Ovary (tissue), 10 donors: ENCODE measurements at regions of chr7 and their contacts with region 1.

Region 1: DNA sequence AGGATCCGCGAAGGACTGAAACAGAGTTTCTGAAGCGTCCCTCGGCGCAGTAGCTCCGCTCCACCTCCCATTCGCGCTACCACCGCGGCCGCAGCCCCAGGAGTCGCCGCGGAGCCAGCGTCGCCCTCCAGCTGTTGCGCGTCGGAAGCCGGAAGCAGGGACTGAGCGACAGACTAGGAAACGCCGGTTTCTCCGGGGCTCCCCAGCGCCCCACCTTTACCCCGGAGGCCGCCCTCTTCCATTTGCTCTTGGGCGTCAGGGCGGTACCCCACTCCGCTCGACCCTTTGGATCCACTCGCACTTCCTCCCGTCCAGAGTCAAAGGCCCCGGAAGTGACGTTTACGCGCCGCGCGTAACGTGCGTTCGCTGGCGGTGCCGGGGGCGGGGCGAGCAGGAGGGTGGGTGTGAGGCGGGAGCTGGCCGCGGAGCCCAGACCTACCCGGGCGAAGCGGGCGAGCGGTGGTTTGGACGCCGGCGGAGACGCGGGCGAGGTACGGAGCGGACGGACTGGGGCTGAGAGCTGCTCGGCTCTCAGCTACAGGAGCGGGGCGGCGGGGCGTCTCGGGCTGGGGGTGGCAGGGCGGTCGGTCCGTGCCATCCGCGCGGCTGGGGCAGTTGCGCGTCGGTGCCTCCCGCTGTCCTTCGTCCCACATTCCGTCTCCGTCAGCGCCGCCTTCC is at the start of gene RABGEF1:
- DNase-seq: peak; percentile 97 to 99 (median 98)
- H3K4me3 ChIP-seq: peak within 1 kb of the TSS; percentile 99
- H3K27ac ChIP-seq: peak within 1 kb of the TSS; percentile 77 to 91
- H3K4me1 ChIP-seq: peaks cover 5% of the 10 kb centered on the region
- H3K27me3 ChIP-seq: no peaks in the 10 kb centered on the region
- CTCF ChIP-seq: peak in 1 of 3 donors; percentile 16
- EP300 ChIP-seq: no peak
- POLR2A ChIP-seq: peak; percentile 95
- total RNA-seq, gene RABGEF1: 22.2 to 29.9 (median 25.4) TPM

Region 2: GRCh38 chr7:66681491-66682349 is 58.7 kb before region 1 on chr7:
- intact Hi-C with region 1: loop called in 2 of 4 experiments (anchors 5 kb)
- DNase-seq: peak; percentile 97 to 98 (median 97)
- H3K4me3 ChIP-seq: peak overlapping the region; percentile 81
- H3K27ac ChIP-seq: peak overlapping the region; percentile 89 to 91
- H3K4me1 ChIP-seq: peaks cover 4% of the 10 kb centered on the region
- H3K27me3 ChIP-seq: no peaks in the 10 kb centered on the region
- CTCF ChIP-seq: no peak
- EP300 ChIP-seq: no peak
- POLR2A ChIP-seq: peak; percentile 97

Region 3: DNA sequence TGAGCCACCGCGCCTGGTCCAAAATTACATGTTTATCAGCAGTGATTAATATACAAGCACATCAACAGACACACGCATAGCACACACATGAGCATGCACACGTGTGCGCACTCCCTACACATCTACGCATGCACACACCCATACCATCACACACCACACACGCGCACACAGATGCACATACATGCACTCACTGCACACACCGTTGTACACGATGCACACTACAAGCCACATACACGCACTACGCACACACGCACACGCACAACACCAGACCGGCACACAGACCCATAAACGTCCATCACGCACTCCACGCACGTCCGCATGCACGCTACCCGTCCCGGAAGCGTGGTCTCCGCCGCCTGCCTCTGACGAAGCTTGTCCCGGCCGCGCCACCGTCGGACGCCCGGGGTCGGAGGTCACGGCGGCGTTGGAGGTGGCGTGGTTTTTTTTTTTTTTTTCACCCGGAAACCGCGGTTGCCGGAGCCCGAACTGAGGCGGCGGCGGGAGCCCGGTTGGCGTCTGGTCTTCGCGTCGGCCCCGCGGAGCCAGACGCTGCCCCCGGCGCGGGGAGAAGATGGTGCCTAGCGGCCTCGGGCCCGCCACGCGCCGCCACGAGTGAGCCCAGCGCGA is 180.4 kb after region 1 on chr7 and contains the start of gene TMEM248:
- intact Hi-C with region 1: no loop called
- DNase-seq: peak; percentile 84 to 93 (median 89)
- H3K4me3 ChIP-seq: peak within 1 kb of the TSS; percentile 77
- H3K27ac ChIP-seq: peak within 1 kb of the TSS; percentile 27 to 52
- H3K4me1 ChIP-seq: peaks cover 10% of the 10 kb centered on the region
- H3K27me3 ChIP-seq: no peaks in the 10 kb centered on the region
- CTCF ChIP-seq: no peak
- EP300 ChIP-seq: no peak
- POLR2A ChIP-seq: peak; percentile 23
- total RNA-seq, gene TMEM248: 71.9 to 118 (median 102) TPM